PC-3 (cell line): ENCODE measurements at regions of chr13 and their contacts with region 1.

Region 1: GRCh38 chr13:93603043-93603442 is 376.4 kb downstream of the GPC6 start:
- DNase-seq: peak; percentile 90
- ATAC-seq: peak; percentile 100
- H3K4me3 ChIP-seq: no peak overlapping the region
- H3K27ac ChIP-seq: peak overlapping the region; percentile 49
- H3K4me1 ChIP-seq: peaks cover 18% of the 10 kb centered on the region
- H3K27me3 ChIP-seq: no peaks in the 10 kb centered on the region
- CTCF ChIP-seq: no peak

Region 2: GRCh38 chr13:93398167-93398728 is 204.8 kb before region 1 on chr13:
- CTCF ChIA-PET with region 1: no interaction called
- POLR2A ChIA-PET with region 1: no interaction called
- intact Hi-C with region 1: no loop called
- DNase-seq: no peak
- ATAC-seq: no peak
- H3K4me3 ChIP-seq: no peak overlapping the region
- H3K27ac ChIP-seq: no peak overlapping the region
- H3K4me1 ChIP-seq: peaks cover 9% of the 10 kb centered on the region
- H3K27me3 ChIP-seq: no peaks in the 10 kb centered on the region
- CTCF ChIP-seq: no peak

Region 3: DNA sequence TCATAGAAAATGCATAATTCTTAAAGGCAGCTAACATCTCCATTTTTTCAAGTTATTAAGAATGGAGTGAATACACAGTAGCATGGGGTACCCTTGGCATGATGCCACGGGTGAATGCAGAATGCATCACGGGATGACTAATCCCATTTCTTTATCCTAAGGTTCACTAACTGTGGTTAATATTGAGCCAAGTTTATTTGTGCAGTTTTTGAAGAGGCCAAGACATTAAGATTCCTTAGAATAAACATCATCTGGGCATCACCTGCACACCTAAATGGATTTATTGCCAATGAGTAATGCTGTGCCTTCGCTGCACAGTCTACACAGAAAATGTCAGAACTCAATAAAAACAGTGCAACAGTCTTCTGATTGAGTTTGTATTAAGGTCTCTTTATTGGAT is 43.3 kb before region 1 on chr13:
- CTCF ChIA-PET with region 1: no interaction called
- POLR2A ChIA-PET with region 1: no interaction called
- intact Hi-C with region 1: loop called (anchors 2 kb)
- DNase-seq: peak; percentile 94
- ATAC-seq: peak; percentile 98
- H3K4me3 ChIP-seq: no peak overlapping the region
- H3K27ac ChIP-seq: peak overlapping the region; percentile 69
- H3K4me1 ChIP-seq: peaks cover 18% of the 10 kb centered on the region
- H3K27me3 ChIP-seq: no peaks in the 10 kb centered on the region
- CTCF ChIP-seq: no peak